Caco-2 (cell line): ENCODE measurements at regions of chr18 and their contacts with region 1.

Region 1: DNA sequence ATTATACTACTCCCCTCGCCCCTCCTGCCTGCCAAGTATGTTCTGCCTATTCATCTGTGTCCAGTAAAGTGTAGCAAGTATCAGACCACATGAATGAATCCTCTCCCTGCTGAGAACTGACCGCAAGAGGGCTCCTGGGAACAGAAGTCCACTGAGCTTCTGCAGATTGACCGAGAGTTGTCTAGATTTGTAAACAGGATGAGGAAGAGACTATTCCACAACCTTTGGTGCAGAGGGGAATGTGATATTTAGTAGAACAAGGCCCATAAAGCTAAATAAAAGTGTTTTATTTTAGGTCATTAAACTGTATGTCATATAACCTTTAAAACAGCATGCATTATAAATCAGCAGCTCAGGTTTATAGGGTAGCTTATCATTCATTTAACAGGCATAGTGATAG is 377.0 kb downstream of the DCC start:
- DNase-seq: peak; percentile 32 to 36
- H3K4me3 ChIP-seq: no peak overlapping the region
- H3K4me3 Mint-ChIP-seq: no peak overlapping the region
- H3K27ac Mint-ChIP-seq: no peak overlapping the region
- H3K4me1 ChIP-seq: no peaks in the 10 kb centered on the region
- H3K4me1 Mint-ChIP-seq: no peaks in the 10 kb centered on the region
- H3K27me3 ChIP-seq: no peaks in the 10 kb centered on the region
- H3K27me3 Mint-ChIP-seq: no peaks in the 10 kb centered on the region
- CTCF ChIP-seq: peak; percentile 27 to 50

Region 2: DNA sequence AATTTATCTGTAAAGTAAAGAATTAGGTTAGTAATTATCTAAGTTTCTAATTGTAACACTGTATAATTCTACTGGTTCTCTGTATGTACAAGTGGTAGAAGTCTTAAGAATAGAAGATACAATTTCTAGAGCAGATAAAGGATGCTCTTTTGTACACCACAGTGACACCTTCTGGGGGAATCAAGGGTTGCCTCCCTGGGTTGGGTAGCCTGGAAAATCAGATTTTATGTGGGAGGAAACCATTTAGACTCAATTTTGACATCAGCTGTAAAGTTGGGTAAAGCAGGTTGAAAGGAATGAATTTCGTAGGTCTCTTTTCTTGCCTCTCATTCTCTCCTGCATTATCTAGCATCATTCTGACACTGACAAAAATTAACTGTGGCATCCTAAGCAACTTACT is 22.2 kb before region 1 on chr18:
- CTCF ChIA-PET with region 1: no interaction called
- POLR2A ChIA-PET with region 1: no interaction called
- intact Hi-C with region 1: no loop called
- DNase-seq: peak in 1 of 2 experiments; percentile 17
- H3K4me3 ChIP-seq: no peak overlapping the region
- H3K4me3 Mint-ChIP-seq: no peak overlapping the region
- H3K27ac Mint-ChIP-seq: no peak overlapping the region
- H3K4me1 ChIP-seq: no peaks in the 10 kb centered on the region
- H3K4me1 Mint-ChIP-seq: no peaks in the 10 kb centered on the region
- H3K27me3 ChIP-seq: no peaks in the 10 kb centered on the region
- H3K27me3 Mint-ChIP-seq: no peaks in the 10 kb centered on the region
- CTCF ChIP-seq: peak in 1 of 2 experiments; percentile 24

Region 3: GRCh38 chr18:52903857-52904256 is 186.9 kb after region 1 on chr18:
- CTCF ChIA-PET with region 1: no interaction called
- POLR2A ChIA-PET with region 1: no interaction called
- intact Hi-C with region 1: loop called (anchors 1 kb)
- DNase-seq: peak in 1 of 2 experiments; percentile 15
- H3K4me3 ChIP-seq: no peak overlapping the region
- H3K4me3 Mint-ChIP-seq: no peak overlapping the region
- H3K27ac Mint-ChIP-seq: no peak overlapping the region
- H3K4me1 ChIP-seq: no peaks in the 10 kb centered on the region
- H3K4me1 Mint-ChIP-seq: no peaks in the 10 kb centered on the region
- H3K27me3 ChIP-seq: no peaks in the 10 kb centered on the region
- H3K27me3 Mint-ChIP-seq: no peaks in the 10 kb centered on the region
- CTCF ChIP-seq: peak; percentile 36 to 41

Region 4: DNA sequence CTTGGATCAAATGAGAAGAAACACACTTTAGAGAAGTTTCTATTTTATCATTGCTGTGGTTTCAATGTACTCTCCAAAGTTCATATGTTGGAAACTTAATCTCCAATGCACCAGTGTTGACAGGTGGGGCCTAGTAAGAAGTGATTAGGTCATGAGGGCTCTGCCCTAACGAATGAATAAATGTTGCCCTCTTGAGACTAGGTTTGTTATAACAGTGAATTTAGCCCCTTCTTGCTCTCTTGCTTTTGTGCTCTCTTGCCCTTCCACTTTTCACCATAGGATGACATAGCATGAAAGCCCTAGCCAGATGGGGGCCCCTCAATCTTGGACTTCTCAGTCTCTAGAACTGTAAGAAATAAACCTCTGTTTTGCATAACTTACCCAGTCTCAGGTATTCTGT is 287.8 kb after region 1 on chr18:
- CTCF ChIA-PET with region 1: interaction called, 9 read pairs
- POLR2A ChIA-PET with region 1: no interaction called
- intact Hi-C with region 1: loop called (anchors 1 kb)
- DNase-seq: no peak
- H3K4me3 ChIP-seq: no peak overlapping the region
- H3K4me3 Mint-ChIP-seq: no peak overlapping the region
- H3K27ac Mint-ChIP-seq: no peak overlapping the region
- H3K4me1 ChIP-seq: no peaks in the 10 kb centered on the region
- H3K4me1 Mint-ChIP-seq: no peaks in the 10 kb centered on the region
- H3K27me3 ChIP-seq: no peaks in the 10 kb centered on the region
- H3K27me3 Mint-ChIP-seq: no peaks in the 10 kb centered on the region
- CTCF ChIP-seq: no peak

Region 5: GRCh38 chr18:53153281-53153680 is 436.3 kb after region 1 on chr18:
- CTCF ChIA-PET with region 1: no interaction called
- POLR2A ChIA-PET with region 1: no interaction called
- intact Hi-C with region 1: loop called (anchors 10 kb)
- DNase-seq: peak in 1 of 2 experiments; percentile 3
- H3K4me3 ChIP-seq: no peak overlapping the region
- H3K4me3 Mint-ChIP-seq: no peak overlapping the region
- H3K27ac Mint-ChIP-seq: no peak overlapping the region
- H3K4me1 ChIP-seq: no peaks in the 10 kb centered on the region
- H3K4me1 Mint-ChIP-seq: no peaks in the 10 kb centered on the region
- H3K27me3 ChIP-seq: no peaks in the 10 kb centered on the region
- H3K27me3 Mint-ChIP-seq: peaks cover 6% of the 10 kb centered on the region
- CTCF ChIP-seq: peak in 1 of 2 experiments; percentile 16